PC-9 (cell line): ENCODE measurements at regions of chr11 and their contacts with region 1.

Region 1: GRCh38 chr11:99640671-99641070 is 619.9 kb downstream of the CNTN5 start:
- DNase-seq: no peak
- H3K4me3 ChIP-seq: no peak overlapping the region
- H3K27ac ChIP-seq: no peak overlapping the region
- H3K4me1 ChIP-seq: no peaks in the 10 kb centered on the region
- H3K27me3 ChIP-seq: no peaks in the 10 kb centered on the region
- CTCF ChIP-seq: no peak

Region 2: DNA sequence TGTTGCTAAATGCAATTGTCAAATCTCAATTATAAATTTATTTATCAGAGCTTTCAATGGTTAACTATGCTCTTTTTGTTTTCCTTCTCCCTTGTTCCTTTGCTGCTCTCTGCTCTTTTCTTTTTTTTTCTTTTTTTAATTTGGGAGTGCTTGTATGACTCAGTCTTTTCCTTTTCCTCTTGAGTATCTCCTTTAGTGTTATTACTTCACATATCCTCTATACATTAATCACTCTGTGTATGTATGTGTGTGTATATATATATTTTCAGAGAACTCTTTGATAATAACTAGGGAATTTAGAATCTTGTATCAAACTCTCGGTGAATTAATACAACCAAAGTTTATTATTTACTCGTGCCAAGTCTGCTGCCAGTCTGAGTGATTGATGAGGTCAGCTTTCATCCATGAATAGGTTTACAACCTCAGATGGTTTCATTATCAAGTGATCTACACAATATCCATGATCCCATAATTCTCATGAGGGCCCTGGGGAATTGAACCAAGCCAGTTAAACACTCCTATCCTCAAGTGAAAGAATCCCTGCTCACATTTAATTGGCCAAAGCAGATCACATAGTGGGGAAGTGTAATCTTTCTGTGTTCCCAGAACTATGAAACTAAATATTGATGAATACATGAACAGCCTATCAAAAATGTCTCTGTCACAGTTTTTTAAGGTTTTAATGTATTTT is 1363.3 kb before region 1 on chr11:
- CTCF ChIA-PET with region 1: no interaction called
- POLR2A ChIA-PET with region 1: interaction called, 11 read pairs
- intact Hi-C with region 1: no loop called
- DNase-seq: no peak
- H3K4me3 ChIP-seq: no peak overlapping the region
- H3K27ac ChIP-seq: no peak overlapping the region
- H3K4me1 ChIP-seq: no peaks in the 10 kb centered on the region
- H3K27me3 ChIP-seq: no peaks in the 10 kb centered on the region
- CTCF ChIP-seq: no peak

Region 3: GRCh38 chr11:99522467-99523173 is 118.1 kb before region 1 on chr11:
- CTCF ChIA-PET with region 1: no interaction called
- POLR2A ChIA-PET with region 1: no interaction called
- intact Hi-C with region 1: no loop called
- DNase-seq: no peak
- H3K4me3 ChIP-seq: no peak overlapping the region
- H3K27ac ChIP-seq: no peak overlapping the region
- H3K4me1 ChIP-seq: no peaks in the 10 kb centered on the region
- H3K27me3 ChIP-seq: no peaks in the 10 kb centered on the region
- CTCF ChIP-seq: no peak

Region 4: DNA sequence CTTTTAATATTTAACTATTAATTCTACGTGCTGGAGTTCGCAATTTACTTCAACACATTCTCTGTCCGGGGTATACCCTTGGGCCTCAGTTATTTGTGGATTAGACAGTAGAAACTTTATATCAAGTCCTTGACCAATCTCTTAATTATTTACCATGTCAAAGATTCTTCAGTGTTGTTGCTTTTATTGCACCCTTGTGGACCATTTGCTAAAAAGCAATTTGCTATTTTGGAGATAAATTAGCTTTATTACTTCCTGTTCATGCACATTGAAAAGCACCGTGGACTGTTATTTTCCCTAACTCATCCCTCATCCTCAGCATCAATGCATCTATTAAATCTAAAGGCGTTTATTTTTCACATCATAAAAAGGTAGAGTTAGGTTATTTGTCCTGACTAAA is 10.0 kb before region 1 on chr11:
- CTCF ChIA-PET with region 1: no interaction called
- POLR2A ChIA-PET with region 1: no interaction called
- intact Hi-C with region 1: no loop called
- DNase-seq: no peak
- H3K4me3 ChIP-seq: no peak overlapping the region
- H3K27ac ChIP-seq: no peak overlapping the region
- H3K4me1 ChIP-seq: no peaks in the 10 kb centered on the region
- H3K27me3 ChIP-seq: no peaks in the 10 kb centered on the region
- CTCF ChIP-seq: no peak